ENCODE measurements at regions of chr1 and their contacts with region 1.

Region 1: DNA sequence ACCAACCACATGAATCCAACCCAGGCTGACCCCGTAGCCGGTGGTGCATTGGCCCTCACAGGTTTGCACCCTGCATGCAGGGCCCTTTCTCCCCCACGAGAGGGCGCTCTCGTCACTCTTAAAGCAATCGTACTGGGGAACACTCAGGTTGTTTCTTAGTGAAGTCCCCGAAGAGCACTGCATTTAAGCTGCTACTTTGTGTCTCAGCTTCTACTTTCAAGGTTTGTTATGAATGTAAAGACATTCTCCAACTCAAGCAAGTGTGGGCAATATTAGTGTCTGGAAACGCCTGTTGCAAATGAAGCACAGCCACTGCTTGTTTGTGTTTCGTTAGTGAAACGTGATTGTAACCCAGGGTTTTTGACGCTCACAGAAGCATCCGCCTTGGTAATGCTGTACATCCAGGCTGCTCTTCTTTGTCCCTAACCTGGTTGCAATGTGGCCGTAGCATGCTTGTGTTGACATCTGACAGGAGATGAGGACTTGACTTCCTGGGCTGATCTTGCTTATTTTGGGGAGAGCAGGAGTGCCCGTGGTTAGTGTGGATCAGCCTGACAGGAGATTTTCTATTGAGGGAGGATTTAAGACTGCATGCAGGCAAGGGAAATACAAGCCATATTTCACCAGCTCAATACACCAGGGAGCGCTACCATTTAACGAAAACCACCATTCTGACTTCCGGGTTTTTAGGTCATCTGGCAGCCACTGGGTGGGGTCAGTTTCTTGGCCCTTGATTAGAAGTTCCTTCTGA is 79.8 kb downstream of the ST6GALNAC3 start:
- DNase-seq: peak; percentile 50 to 84 (median 74)
- ATAC-seq: peak; percentile 89 to 92 (median 90)
- H3K4me3 ChIP-seq: peak overlapping the region; percentile 42 to 60
- H3K4me3 Mint-ChIP-seq: peak overlapping the region; percentile 74 to 84 (median 76)
- H3K27ac ChIP-seq: peak overlapping the region; percentile 52
- H3K27ac Mint-ChIP-seq: peak overlapping the region; percentile 91 to 94
- H3K4me1 ChIP-seq: peaks cover 4 to 5% of the 10 kb centered on the region in 2 experiments
- H3K4me1 Mint-ChIP-seq: peaks cover 10 to 14% (median 12%) of the 10 kb centered on the region in 3 donors
- H3K27me3 ChIP-seq: no peaks in the 10 kb centered on the region
- H3K27me3 Mint-ChIP-seq: peaks cover 0 to 8% of the 10 kb centered on the region in 2 donors

Region 2: GRCh38 chr1:77126307-77126706 is 971.9 kb after region 1 on chr1:
- CTCF ChIA-PET with region 1: interaction called, 5 to 13 read pairs
- POLR2A ChIA-PET with region 1: no interaction called
- DNase-seq: peak in 13 of 35 experiments; percentile 4 to 62 (median 9)
- ATAC-seq: peak in 2 of 4 experiments; percentile 51 to 58
- H3K4me3 ChIP-seq: no peak overlapping the region
- H3K4me3 Mint-ChIP-seq: no peak overlapping the region
- H3K27ac ChIP-seq: no peak overlapping the region
- H3K27ac Mint-ChIP-seq: no peak overlapping the region
- H3K4me1 ChIP-seq: no peaks in the 10 kb centered on the region
- H3K4me1 Mint-ChIP-seq: no peaks in the 10 kb centered on the region
- H3K27me3 ChIP-seq: no peaks in the 10 kb centered on the region
- H3K27me3 Mint-ChIP-seq: no peaks in the 10 kb centered on the region

Region 3: GRCh38 chr1:77143529-77144121 is 989.2 kb after region 1 on chr1:
- CTCF ChIA-PET with region 1: interaction called, 6 to 25 read pairs
- POLR2A ChIA-PET with region 1: no interaction called
- DNase-seq: peak in 1 of 35 experiments; percentile 35
- ATAC-seq: no peak
- H3K4me3 ChIP-seq: no peak overlapping the region
- H3K4me3 Mint-ChIP-seq: no peak overlapping the region
- H3K27ac ChIP-seq: no peak overlapping the region
- H3K27ac Mint-ChIP-seq: no peak overlapping the region
- H3K4me1 ChIP-seq: peaks cover 0 to 2% of the 10 kb centered on the region in 2 experiments
- H3K4me1 Mint-ChIP-seq: peaks cover 6 to 8% (median 6%) of the 10 kb centered on the region in 3 donors
- H3K27me3 ChIP-seq: no peaks in the 10 kb centered on the region
- H3K27me3 Mint-ChIP-seq: no peaks in the 10 kb centered on the region

Measured in T-cell (primary cell).